Activated CD4-positive, alpha-beta T cell treated with anti-CD3 and anti-CD28 coated beads for 36 hours (primary cell): ENCODE measurements at regions of chr1 and their contacts with region 1.

Region 1: DNA sequence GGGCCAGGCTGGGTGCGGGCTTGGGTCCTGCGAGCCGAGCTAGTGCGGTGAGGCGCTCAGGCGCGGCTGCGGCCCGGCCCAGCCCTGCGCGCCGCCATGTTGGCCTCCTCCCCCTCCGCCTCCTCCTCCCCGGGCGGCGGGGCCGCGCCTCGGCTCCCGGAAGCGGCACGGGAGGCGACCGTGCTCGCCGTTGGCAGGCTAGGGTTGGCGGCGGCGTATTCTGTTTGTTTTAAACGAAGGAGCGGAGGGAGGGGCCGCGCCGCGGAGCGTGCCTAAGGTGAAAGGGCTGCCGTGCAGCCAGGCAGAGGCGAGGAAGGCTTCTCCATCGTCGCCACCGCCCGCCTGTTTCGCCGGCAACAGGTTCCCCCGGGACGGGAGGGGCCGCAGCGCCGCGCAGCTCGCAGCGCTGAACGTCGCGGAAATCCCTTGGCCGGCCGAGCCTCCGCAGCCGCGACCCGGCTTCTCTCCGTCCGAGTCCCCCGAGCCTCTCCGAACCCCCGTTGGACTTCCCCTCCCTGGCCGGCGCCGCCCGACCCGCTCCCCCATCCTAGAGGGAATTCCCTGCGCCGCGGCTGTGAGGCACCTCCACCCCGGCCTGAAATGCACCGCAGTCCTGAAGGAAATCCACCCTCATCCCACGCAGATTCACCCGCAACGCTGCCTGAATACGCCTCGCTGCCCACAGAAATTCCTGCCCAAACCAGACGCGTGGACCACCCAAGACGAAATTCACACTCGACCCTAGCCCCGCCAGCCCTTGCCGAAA is at the start of gene USP24:
- DNase-seq: peak; percentile 90
- ATAC-seq: peak; percentile 84
- H3K4me3 Mint-ChIP-seq: peak within 1 kb of the TSS; percentile 97
- H3K27ac Mint-ChIP-seq: peak within 1 kb of the TSS; percentile 100
- H3K4me1 Mint-ChIP-seq: peaks cover 55% of the 10 kb centered on the region
- H3K27me3 Mint-ChIP-seq: no peaks in the 10 kb centered on the region
- total RNA-seq, gene USP24: 37.0 to 39.7 TPM

Region 2: DNA sequence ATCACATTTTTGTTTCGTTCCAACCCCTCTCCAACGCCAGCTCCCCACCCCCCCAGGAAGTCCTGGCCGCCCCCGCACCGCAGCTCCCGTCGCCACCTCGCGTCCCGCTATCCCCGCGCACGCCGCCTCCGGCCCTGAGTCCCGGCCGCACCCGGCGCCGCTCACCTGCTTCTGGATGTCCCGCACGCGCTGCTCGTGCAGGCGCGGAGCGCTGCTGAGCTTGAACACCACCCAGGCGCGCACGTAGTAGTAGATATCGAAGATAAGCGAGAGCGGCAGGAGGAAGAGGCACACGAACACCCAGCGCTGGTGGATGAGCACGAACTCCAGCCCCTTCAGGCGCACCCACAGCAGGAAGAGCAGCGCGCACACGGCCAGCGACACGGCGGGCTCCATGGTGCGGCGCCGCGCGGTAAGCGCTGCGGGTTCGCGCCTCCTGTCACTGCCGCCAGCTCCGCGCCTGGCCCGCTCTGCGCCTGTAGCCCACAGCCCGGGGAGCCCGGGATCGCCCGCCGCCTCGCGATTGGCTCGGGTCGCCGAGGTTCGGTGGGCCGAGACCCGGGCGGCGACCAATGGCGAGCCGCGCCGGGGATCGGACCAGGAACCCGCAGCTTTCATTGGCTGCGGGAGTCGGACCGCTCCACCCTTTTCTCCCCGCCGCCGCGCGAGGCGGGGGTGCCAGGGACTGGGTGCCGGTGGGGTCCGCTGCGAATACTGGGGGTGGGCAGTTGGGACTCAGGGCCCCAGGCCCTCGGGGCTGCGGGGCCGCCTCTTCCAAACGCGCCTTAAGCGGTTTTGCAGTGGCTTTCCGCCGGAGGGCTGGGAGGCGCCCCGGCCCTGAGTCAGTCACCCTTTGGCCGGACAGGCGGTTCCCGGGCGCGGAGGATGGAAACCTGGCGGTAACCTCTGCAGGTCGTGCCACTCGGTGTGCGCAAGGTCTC is 328.4 kb before region 1 on chr1 and contains the start of gene DHCR24:
- CTCF ChIA-PET with region 1: no interaction called
- POLR2A ChIA-PET with region 1: no interaction called
- intact Hi-C with region 1: loop called in 1 of 2 experiments (anchors 10 kb)
- DNase-seq: peak; percentile 88
- ATAC-seq: peak; percentile 96
- H3K4me3 Mint-ChIP-seq: peak within 1 kb of the TSS; percentile 89
- H3K27ac Mint-ChIP-seq: peak within 1 kb of the TSS; percentile 84
- H3K4me1 Mint-ChIP-seq: peaks cover 39% of the 10 kb centered on the region
- H3K27me3 Mint-ChIP-seq: peaks cover 8% of the 10 kb centered on the region
- total RNA-seq, gene DHCR24: 78.4 to 80.6 TPM

Region 3: GRCh38 chr1:55164906-55165305 is 50.5 kb before region 1 on chr1:
- CTCF ChIA-PET with region 1: no interaction called
- POLR2A ChIA-PET with region 1: no interaction called
- intact Hi-C with region 1: loop called in 1 of 2 experiments (anchors 5 kb)
- DNase-seq: no peak
- ATAC-seq: peak; percentile 87
- H3K4me3 Mint-ChIP-seq: no peak overlapping the region
- H3K27ac Mint-ChIP-seq: peak overlapping the region; percentile 70
- H3K4me1 Mint-ChIP-seq: peaks cover 41% of the 10 kb centered on the region
- H3K27me3 Mint-ChIP-seq: no peaks in the 10 kb centered on the region

Region 4: GRCh38 chr1:55375617-55376258 is 160.3 kb after region 1 on chr1:
- CTCF ChIA-PET with region 1: no interaction called
- POLR2A ChIA-PET with region 1: no interaction called
- intact Hi-C with region 1: no loop called
- DNase-seq: peak; percentile 61
- ATAC-seq: no peak
- H3K4me3 Mint-ChIP-seq: no peak overlapping the region
- H3K27ac Mint-ChIP-seq: no peak overlapping the region
- H3K4me1 Mint-ChIP-seq: peaks cover 10% of the 10 kb centered on the region
- H3K27me3 Mint-ChIP-seq: no peaks in the 10 kb centered on the region